CD8-positive, alpha-beta T cell (primary cell): ENCODE measurements at regions of chr14 and their contacts with region 1.

Region 1: DNA sequence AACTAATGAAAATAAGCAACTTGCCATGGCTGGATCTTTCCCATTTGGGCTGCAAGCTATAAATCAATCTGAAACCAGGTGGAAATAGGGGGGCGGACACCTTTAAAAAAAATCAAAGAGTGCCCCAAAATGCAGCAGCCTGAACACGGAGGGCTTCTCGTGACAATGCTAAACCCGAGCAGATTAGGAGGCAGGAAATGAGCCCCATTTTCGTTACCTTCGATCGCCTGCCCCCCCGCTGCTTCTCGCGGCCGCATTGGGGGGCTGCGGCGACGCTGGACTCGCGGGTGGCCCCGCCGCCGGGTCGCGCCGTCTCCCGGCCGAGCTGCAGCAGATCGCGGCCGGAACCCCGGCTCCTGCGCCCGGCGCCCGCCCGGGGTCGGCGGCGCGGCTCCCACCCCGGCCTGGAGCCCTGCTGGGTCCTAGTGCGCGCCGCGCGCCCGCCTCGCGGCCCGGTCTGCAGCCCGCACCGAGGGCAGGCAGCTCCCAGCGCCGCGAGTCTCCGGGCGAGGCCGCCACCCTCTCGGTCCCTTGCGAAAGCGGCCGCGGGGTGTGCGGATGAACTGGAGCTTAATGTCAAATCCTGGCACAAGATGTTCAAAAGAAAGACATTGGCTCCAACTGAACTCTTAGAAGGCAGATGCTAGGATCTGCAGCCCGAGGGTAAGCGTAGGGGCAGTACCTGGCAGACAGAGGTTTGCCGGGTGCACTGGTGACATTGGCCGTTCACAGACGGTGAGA is 201.9 kb upstream of the FOXN3 start:
- DNase-seq: peak; percentile 43 to 87 (median 66)
- ATAC-seq: peak; percentile 44
- H3K4me3 ChIP-seq: peak overlapping the region; percentile 64 to 73
- H3K4me3 Mint-ChIP-seq: peak overlapping the region; percentile 97
- H3K27ac ChIP-seq: peak overlapping the region; percentile 89 to 90
- H3K27ac Mint-ChIP-seq: peak overlapping the region; percentile 98
- H3K4me1 ChIP-seq: peaks cover 54% of the 10 kb centered on the region
- H3K4me1 Mint-ChIP-seq: peaks cover 68% of the 10 kb centered on the region
- H3K27me3 ChIP-seq: no peaks in the 10 kb centered on the region
- H3K27me3 Mint-ChIP-seq: no peaks in the 10 kb centered on the region
- CTCF ChIP-seq: no peak

Region 2: GRCh38 chr14:89365061-89365801 is 253.8 kb before region 1 on chr14:
- CTCF ChIA-PET with region 1: no interaction called
- POLR2A ChIA-PET with region 1: interaction called, 5 read pairs
- intact Hi-C with region 1: loop called in 1 of 2 experiments (anchors 1 kb)
- DNase-seq: peak in 8 of 9 experiments; percentile 33 to 88 (median 62)
- ATAC-seq: peak; percentile 92
- H3K4me3 ChIP-seq: peak overlapping the region; percentile 34 to 36
- H3K4me3 Mint-ChIP-seq: peak overlapping the region; percentile 64
- H3K27ac ChIP-seq: peak overlapping the region; percentile 60 to 73
- H3K27ac Mint-ChIP-seq: peak overlapping the region; percentile 85
- H3K4me1 ChIP-seq: peaks cover 35% of the 10 kb centered on the region
- H3K4me1 Mint-ChIP-seq: peaks cover 56% of the 10 kb centered on the region
- H3K27me3 ChIP-seq: no peaks in the 10 kb centered on the region
- H3K27me3 Mint-ChIP-seq: no peaks in the 10 kb centered on the region
- CTCF ChIP-seq: no peak

Region 3: DNA sequence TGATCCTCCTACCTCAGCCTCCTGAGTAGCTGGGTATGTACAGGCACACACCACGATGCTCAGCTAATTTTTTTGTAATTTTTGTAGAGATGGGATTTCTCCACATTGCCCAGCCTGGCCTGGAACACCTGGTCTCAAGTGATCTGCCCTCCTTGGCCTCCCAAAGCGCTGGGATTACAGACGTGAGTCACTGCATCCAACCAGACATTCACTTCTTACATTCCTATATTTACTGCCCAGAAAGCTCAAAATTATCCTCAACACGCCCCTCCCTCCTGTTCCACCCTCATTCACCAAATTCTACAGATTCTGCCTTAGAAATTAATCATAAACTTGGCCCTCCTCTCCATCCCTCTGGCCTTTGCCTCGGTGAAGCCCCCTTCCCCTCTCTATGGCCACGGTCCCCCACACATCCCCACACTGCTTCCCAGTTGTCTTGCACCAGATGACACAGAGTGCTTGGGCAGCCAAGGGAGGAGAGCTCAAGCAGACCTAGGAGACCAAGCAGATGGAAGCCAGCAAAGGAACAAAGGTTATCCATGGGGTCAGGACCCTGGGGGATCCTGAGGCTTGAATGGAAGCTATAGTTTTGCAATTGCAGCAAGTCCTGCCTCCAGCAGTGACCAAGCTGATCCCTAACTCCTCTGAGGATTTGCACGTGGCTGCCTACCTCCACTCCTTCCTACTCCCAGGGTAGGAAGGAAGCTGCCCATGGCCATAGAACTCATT is 11.3 kb after region 1 on chr14:
- CTCF ChIA-PET with region 1: no interaction called
- POLR2A ChIA-PET with region 1: interaction called, 5 read pairs
- intact Hi-C with region 1: loop called in 1 of 2 experiments (anchors 1 kb)
- DNase-seq: no peak
- ATAC-seq: no peak
- H3K4me3 ChIP-seq: no peak overlapping the region
- H3K4me3 Mint-ChIP-seq: no peak overlapping the region
- H3K27ac ChIP-seq: no peak overlapping the region
- H3K27ac Mint-ChIP-seq: no peak overlapping the region
- H3K4me1 ChIP-seq: peaks cover 25% of the 10 kb centered on the region
- H3K4me1 Mint-ChIP-seq: peaks cover 46% of the 10 kb centered on the region
- H3K27me3 ChIP-seq: no peaks in the 10 kb centered on the region
- H3K27me3 Mint-ChIP-seq: no peaks in the 10 kb centered on the region
- CTCF ChIP-seq: no peak

Region 4: DNA sequence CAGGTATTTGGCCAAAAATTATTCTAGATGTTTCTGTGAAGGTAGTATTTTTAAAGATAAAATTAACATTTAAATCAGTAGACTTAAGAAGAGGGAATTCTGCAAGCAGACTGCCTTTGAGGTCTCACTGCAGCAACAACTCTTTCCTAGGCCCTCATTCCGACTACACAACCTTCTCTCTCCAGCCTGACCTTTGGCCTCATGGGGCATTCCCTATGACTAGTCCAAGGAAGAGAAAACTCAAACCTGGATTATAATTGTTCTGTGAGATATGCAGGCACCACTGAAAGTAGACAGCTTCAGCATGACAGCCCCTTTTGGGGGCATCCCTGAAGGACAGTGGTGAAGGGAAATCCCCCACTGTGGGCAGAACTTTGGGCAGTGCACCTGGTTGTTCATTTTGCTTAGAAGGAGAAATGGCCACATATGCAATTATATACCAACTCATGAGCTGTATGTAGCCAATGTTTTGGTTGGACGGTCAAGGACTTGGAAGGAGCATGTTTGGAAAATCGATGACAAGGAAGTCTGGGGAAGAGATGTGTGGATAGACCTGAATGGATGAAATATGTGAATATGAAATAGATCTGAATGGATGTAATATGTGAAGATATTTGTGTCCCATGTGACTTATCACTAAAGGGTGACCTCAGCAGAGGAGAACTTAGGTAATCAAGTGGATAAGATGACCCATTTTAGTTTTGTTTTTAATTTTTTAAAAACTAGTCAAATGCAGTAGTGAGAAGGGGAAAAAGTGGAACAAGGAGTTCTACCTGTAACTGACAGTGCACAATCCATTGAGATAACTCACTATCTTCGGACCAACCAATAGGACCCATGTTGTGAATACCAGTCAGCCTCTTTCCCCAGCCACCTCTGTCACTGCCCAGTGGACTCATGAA is 31.3 kb after region 1 on chr14:
- CTCF ChIA-PET with region 1: no interaction called
- POLR2A ChIA-PET with region 1: no interaction called
- intact Hi-C with region 1: no loop called
- DNase-seq: no peak
- ATAC-seq: no peak
- H3K4me3 ChIP-seq: no peak overlapping the region
- H3K4me3 Mint-ChIP-seq: no peak overlapping the region
- H3K27ac ChIP-seq: no peak overlapping the region
- H3K27ac Mint-ChIP-seq: no peak overlapping the region
- H3K4me1 ChIP-seq: no peaks in the 10 kb centered on the region
- H3K4me1 Mint-ChIP-seq: peaks cover 5% of the 10 kb centered on the region
- H3K27me3 ChIP-seq: no peaks in the 10 kb centered on the region
- H3K27me3 Mint-ChIP-seq: no peaks in the 10 kb centered on the region
- CTCF ChIP-seq: no peak

Region 5: GRCh38 chr14:89681086-89682018 is 62.4 kb after region 1 on chr14:
- CTCF ChIA-PET with region 1: no interaction called
- POLR2A ChIA-PET with region 1: interaction called, 3 read pairs
- intact Hi-C with region 1: loop called in 1 of 2 experiments (anchors 2 kb)
- DNase-seq: peak in 6 of 9 experiments; percentile 21 to 64 (median 40)
- ATAC-seq: peak; percentile 69
- H3K4me3 ChIP-seq: peak overlapping the region; percentile 15 to 36
- H3K4me3 Mint-ChIP-seq: peak overlapping the region; percentile 73
- H3K27ac ChIP-seq: peak overlapping the region; percentile 12 to 57
- H3K27ac Mint-ChIP-seq: peak overlapping the region; percentile 89
- H3K4me1 ChIP-seq: peaks cover 34% of the 10 kb centered on the region
- H3K4me1 Mint-ChIP-seq: peaks cover 42% of the 10 kb centered on the region
- H3K27me3 ChIP-seq: no peaks in the 10 kb centered on the region
- H3K27me3 Mint-ChIP-seq: no peaks in the 10 kb centered on the region
- CTCF ChIP-seq: no peak

Region 6: DNA sequence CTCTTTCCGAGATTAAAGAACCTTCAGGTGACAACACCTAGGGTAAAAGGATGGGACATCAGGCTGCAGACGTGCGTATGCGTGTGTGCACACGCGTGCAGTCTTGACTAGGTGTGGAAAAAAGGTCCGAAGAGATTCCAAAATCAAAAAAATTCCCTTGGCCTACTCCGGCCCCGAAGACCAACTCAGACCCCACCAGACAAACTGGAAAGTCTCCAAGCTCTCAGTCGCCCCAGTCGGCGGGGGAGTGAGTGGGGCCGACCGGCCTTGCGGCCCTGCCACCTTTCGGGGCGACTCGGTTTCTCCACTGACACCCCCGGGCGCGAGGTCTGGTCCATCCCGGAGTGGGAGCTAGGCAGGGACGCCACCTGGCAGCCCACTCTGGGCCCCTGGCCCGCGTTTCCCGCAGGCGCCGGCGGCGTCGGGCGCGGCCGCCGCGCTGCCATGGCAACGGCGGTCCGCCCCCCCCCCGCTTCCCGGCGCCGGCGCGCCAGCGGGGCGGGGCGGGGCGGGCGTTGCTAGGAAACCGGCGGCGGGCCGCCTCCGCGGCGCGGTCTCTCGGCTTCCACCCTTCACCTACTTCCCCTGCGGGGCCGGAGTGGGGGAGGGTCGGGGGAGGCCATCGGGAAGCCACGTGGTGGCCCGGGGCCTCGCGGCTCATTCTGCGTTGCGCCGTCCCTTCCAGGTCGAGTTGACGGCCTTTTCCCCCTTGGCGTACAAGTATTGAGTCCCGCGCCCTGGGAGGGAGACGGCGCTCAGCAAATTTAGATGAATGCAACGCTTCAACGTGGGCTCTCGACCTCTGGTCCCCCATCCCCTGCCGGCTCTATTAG is 82.4 kb after region 1 on chr14:
- CTCF ChIA-PET with region 1: interaction called, 3 read pairs
- POLR2A ChIA-PET with region 1: interaction called, 4 read pairs
- intact Hi-C with region 1: loop called (anchors 1 kb)
- DNase-seq: peak; percentile 66 to 90 (median 82)
- ATAC-seq: peak; percentile 84
- H3K4me3 ChIP-seq: peak overlapping the region; percentile 56 to 69
- H3K4me3 Mint-ChIP-seq: peak overlapping the region; percentile 86
- H3K27ac ChIP-seq: peak overlapping the region; percentile 57 to 62
- H3K27ac Mint-ChIP-seq: peak overlapping the region; percentile 88
- H3K4me1 ChIP-seq: peaks cover 27% of the 10 kb centered on the region
- H3K4me1 Mint-ChIP-seq: peaks cover 53% of the 10 kb centered on the region
- H3K27me3 ChIP-seq: no peaks in the 10 kb centered on the region
- H3K27me3 Mint-ChIP-seq: no peaks in the 10 kb centered on the region
- CTCF ChIP-seq: no peak